CD4-positive, alpha-beta memory T cell (primary cell): ENCODE measurements at regions of chr14 and their contacts with region 1.

Region 1: DNA sequence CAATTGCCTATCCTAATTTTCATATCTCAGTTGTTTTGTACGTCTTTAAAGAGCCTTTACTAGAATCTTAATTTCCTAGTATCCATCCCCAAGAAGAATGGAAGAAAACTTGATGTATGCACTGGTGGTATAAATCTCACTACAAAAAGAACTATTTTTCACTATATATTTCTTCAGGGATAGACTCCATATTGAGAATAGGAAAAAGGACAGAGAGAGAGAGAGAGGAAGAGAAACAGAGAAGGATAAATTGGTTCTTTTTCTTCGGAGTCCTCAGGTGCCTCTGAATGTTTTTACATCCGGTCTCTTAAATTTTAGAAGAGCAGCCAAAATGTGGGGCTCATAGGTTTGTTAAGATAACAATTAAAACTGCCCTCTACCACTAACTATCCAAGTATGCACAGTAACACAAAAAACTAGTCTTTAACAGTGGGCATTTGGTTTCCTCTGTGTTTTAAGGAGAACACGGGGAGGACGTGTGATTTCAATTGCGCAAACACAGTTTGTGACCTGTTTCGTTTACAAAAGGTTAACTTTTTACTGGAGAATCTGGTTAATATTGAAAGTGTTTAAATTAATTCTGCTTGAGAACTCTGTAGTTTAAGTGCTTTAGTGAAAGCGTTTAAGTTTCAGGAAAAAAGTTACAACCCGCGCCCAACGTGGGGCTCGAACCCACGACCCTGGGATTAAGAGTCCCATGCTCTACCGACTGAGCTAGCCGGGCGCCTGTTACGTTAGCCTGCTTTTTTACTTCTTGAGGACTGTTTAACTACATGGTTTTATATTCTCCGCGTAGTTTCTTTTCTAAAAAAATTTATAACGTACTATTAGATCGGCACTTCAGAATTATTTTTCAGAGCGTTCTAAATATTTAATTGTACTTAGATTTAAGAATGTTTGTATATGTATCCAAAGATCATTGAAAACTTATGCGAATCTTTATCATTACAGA is 5.1 kb upstream of the PSMA3 start:
- DNase-seq: peak; percentile 84 to 88 (median 87)
- H3K4me3 ChIP-seq: peak overlapping the region; percentile 82 to 84
- H3K4me3 Mint-ChIP-seq: no peak overlapping the region
- H3K27ac ChIP-seq: peak overlapping the region; percentile 57
- H3K27ac Mint-ChIP-seq: no peak overlapping the region
- H3K4me1 ChIP-seq: peaks cover 11% of the 10 kb centered on the region
- H3K4me1 Mint-ChIP-seq: peaks cover 17 to 23% (median 20%) of the 10 kb centered on the region in 4 donors
- H3K27me3 ChIP-seq: no peaks in the 10 kb centered on the region
- H3K27me3 Mint-ChIP-seq: peaks cover 0 to 2% of the 10 kb centered on the region in 2 donors

Region 2: GRCh38 chr14:58082491-58083098 is 156.9 kb before region 1 on chr14:
- CTCF ChIA-PET with region 1: no interaction called
- POLR2A ChIA-PET with region 1: no interaction called
- intact Hi-C with region 1: no loop called
- DNase-seq: no peak
- H3K4me3 ChIP-seq: no peak overlapping the region
- H3K4me3 Mint-ChIP-seq: no peak overlapping the region
- H3K27ac ChIP-seq: no peak overlapping the region
- H3K27ac Mint-ChIP-seq: no peak overlapping the region
- H3K4me1 ChIP-seq: no peaks in the 10 kb centered on the region
- H3K4me1 Mint-ChIP-seq: no peaks in the 10 kb centered on the region
- H3K27me3 ChIP-seq: no peaks in the 10 kb centered on the region
- H3K27me3 Mint-ChIP-seq: peaks cover 17 to 20% of the 10 kb centered on the region in 2 donors

Region 3: GRCh38 chr14:58199726-58200479 is 39.6 kb before region 1 on chr14 and contains the start of gene ACTR10:
- CTCF ChIA-PET with region 1: interaction called, 5 read pairs
- POLR2A ChIA-PET with region 1: interaction called, 23 read pairs
- intact Hi-C with region 1: loop called (anchors 1 kb)
- DNase-seq: peak; percentile 84 to 91 (median 87)
- H3K4me3 ChIP-seq: peak within 1 kb of the TSS; percentile 64 to 75
- H3K4me3 Mint-ChIP-seq: peak within 1 kb of the TSS; percentile 94 to 97 (median 96)
- H3K27ac ChIP-seq: peak within 1 kb of the TSS; percentile 78
- H3K27ac Mint-ChIP-seq: peak within 1 kb of the TSS; percentile 94 to 99 (median 98)
- H3K4me1 ChIP-seq: peaks cover 33% of the 10 kb centered on the region
- H3K4me1 Mint-ChIP-seq: peaks cover 22 to 48% (median 34%) of the 10 kb centered on the region in 4 donors
- H3K27me3 ChIP-seq: no peaks in the 10 kb centered on the region
- H3K27me3 Mint-ChIP-seq: no peaks in the 10 kb centered on the region
- total RNA-seq, gene ACTR10: 53.7 to 54.9 TPM